Caco-2 (cell line): ENCODE measurements at regions of chr10 and their contacts with region 1.

Region 1: GRCh38 chr10:82572744-82573143 is 697.8 kb downstream of the NRG3 start:
- DNase-seq: no peak
- H3K4me3 ChIP-seq: no peak overlapping the region
- H3K4me3 Mint-ChIP-seq: no peak overlapping the region
- H3K27ac Mint-ChIP-seq: no peak overlapping the region
- H3K4me1 ChIP-seq: peaks cover 40% of the 10 kb centered on the region
- H3K4me1 Mint-ChIP-seq: peaks cover 16% of the 10 kb centered on the region
- H3K27me3 ChIP-seq: no peaks in the 10 kb centered on the region
- H3K27me3 Mint-ChIP-seq: no peaks in the 10 kb centered on the region
- CTCF ChIP-seq: no peak

Region 2: GRCh38 chr10:82411416-82411815 is 161.3 kb before region 1 on chr10:
- CTCF ChIA-PET with region 1: no interaction called
- POLR2A ChIA-PET with region 1: no interaction called
- intact Hi-C with region 1: loop called (anchors 1 kb)
- DNase-seq: peak in 1 of 2 experiments; percentile 29
- H3K4me3 ChIP-seq: no peak overlapping the region
- H3K4me3 Mint-ChIP-seq: peak overlapping the region; percentile 5
- H3K27ac Mint-ChIP-seq: peak overlapping the region; percentile 25
- H3K4me1 ChIP-seq: peaks cover 30% of the 10 kb centered on the region
- H3K4me1 Mint-ChIP-seq: peaks cover 13% of the 10 kb centered on the region
- H3K27me3 ChIP-seq: no peaks in the 10 kb centered on the region
- H3K27me3 Mint-ChIP-seq: no peaks in the 10 kb centered on the region
- CTCF ChIP-seq: no peak

Region 3: GRCh38 chr10:82535457-82535856 is 37.3 kb before region 1 on chr10:
- CTCF ChIA-PET with region 1: no interaction called
- POLR2A ChIA-PET with region 1: no interaction called
- intact Hi-C with region 1: no loop called
- DNase-seq: no peak
- H3K4me3 ChIP-seq: no peak overlapping the region
- H3K4me3 Mint-ChIP-seq: no peak overlapping the region
- H3K27ac Mint-ChIP-seq: no peak overlapping the region
- H3K4me1 ChIP-seq: no peaks in the 10 kb centered on the region
- H3K4me1 Mint-ChIP-seq: peaks cover 5% of the 10 kb centered on the region
- H3K27me3 ChIP-seq: no peaks in the 10 kb centered on the region
- H3K27me3 Mint-ChIP-seq: no peaks in the 10 kb centered on the region
- CTCF ChIP-seq: no peak

Region 4: GRCh38 chr10:82591420-82591819 is 18.7 kb after region 1 on chr10:
- CTCF ChIA-PET with region 1: no interaction called
- POLR2A ChIA-PET with region 1: no interaction called
- intact Hi-C with region 1: loop called (anchors 2 kb)
- DNase-seq: no peak
- H3K4me3 ChIP-seq: no peak overlapping the region
- H3K4me3 Mint-ChIP-seq: no peak overlapping the region
- H3K27ac Mint-ChIP-seq: no peak overlapping the region
- H3K4me1 ChIP-seq: peaks cover 33% of the 10 kb centered on the region
- H3K4me1 Mint-ChIP-seq: peaks cover 16% of the 10 kb centered on the region
- H3K27me3 ChIP-seq: no peaks in the 10 kb centered on the region
- H3K27me3 Mint-ChIP-seq: no peaks in the 10 kb centered on the region
- CTCF ChIP-seq: no peak